Right ventricle myocardium inferior (tissue), 1 donor: ENCODE measurements at regions of chr1 and their contacts with region 1.

Region 1: DNA sequence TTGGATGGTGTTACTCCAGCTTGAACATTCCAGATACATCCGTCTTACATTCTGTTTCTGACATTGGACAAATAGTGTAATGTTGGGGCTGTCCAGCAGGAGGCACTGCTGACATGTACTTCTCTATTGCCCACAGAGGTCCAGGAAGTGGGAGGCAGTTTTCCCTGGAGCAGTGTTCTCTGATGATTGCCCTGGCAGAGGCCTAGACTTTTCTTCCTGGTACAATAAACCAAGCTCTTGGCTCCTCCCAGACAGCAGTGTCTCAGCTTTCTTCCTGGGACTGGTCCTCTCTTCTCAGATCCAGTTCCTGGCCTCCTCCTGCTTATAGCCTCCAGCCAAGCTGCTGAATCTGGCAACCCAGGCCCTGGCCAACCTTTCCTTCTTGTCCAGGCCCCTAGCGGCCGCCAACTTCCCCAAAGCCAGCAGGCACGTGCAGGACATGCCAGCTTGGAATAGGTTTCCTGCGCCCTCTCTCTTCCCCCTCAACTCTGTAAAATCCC is 14.9 kb upstream of the IFNLR1 start:
- DNase-seq: no peak
- ATAC-seq: peak; percentile 61

Region 2: GRCh38 chr1:24283326-24284155 is 81.5 kb after region 1 on chr1:
- intact Hi-C with region 1: no loop called
- DNase-seq: no peak
- ATAC-seq: no peak

Region 3: DNA sequence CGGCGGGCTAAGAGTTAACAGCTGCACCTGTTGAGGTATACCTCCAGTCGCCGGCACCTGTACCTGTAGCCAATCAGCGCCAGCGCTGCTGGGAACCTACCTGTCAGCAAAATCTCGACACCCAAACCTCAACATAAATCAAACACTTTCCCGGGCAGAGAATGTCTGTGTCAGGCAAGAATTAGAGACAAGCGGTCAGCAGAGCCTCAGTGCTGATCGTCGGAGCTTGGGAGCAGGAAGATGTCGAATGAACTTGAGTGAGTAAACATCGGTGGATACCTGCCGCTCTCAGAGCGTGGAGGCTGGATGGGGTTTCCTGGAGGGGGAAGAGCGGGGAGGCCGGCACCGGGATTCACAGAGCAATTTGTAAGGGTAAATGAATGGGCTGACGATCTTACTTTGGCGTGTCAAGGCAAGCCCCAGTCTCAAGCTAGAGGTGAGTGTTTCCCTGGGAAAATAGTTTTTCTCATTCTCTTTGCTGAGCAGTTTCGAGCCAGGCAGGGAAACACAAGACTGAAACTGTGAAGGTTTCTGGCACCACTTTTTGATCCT is 117.4 kb after region 1 on chr1 and contains the start of gene GRHL3:
- intact Hi-C with region 1: loop called (anchors 10 kb)
- DNase-seq: no peak
- ATAC-seq: no peak
- total RNA-seq, gene GRHL3: not detected

Region 4: GRCh38 chr1:24391882-24392603 is 190.1 kb after region 1 on chr1:
- intact Hi-C with region 1: loop called (anchors 1 kb)
- DNase-seq: no peak
- ATAC-seq: peak; percentile 86

Region 5: DNA sequence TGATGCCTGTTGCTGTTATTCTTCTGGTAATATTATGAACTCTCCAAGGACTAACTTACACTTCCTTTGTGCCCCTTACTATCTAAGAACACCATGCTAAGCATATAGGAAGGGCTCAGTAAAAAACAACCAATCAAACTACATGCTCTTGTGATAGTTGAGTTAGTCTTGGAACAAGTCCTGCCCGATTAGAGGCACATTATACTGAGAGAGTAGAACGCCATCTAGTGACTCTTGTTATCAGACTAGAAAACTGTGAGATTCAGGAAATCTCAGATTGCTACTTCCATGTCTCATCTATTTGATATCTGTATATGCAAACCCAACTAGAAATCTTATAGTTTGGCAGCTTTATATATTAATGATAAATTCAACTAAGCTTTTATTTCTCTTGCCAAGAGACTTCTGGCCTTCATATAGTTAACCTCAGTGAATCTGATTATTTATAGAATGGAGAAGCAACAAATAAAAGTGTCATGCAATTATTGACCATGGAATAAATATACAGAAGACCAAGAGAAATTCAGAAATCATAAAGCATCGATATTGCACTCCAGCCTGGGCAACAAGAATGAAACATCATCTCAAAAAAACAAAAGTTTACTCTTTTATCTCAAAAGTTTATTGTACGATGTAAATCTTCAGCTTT is 433.3 kb after region 1 on chr1:
- intact Hi-C with region 1: loop called (anchors 5 kb)
- DNase-seq: no peak
- ATAC-seq: no peak